ENCODE measurements at regions of chr12 and their contacts with region 1.

Region 1: GRCh38 chr12:104462931-104463339 is 6.2 kb downstream of the CHST11 start:
- DNase-seq: peak; percentile 71 to 76 (median 73)
- H3K4me3 ChIP-seq: peak overlapping the region in 2 of 3 experiments; percentile 10 to 64
- H3K4me3 Mint-ChIP-seq: peak overlapping the region; percentile 72 to 77
- H3K27ac ChIP-seq: peak overlapping the region; percentile 54 to 88
- H3K27ac Mint-ChIP-seq: peak overlapping the region; percentile 89 to 96 (median 94)
- H3K4me1 ChIP-seq: peaks cover 79 to 95% of the 10 kb centered on the region in 2 donors
- H3K4me1 Mint-ChIP-seq: peaks cover 82% of the 10 kb centered on the region
- H3K27me3 ChIP-seq: no peaks in the 10 kb centered on the region
- H3K27me3 Mint-ChIP-seq: peaks cover 0 to 2% (median 0%) of the 10 kb centered on the region in 3 donors
- CTCF ChIP-seq: no peak

Region 2: GRCh38 chr12:104478396-104479122 is 15.6 kb after region 1 on chr12:
- intact Hi-C with region 1: loop called in 1 of 2 experiments (anchors 2 kb)
- DNase-seq: peak; percentile 68 to 81 (median 79)
- H3K4me3 ChIP-seq: peak overlapping the region; percentile 29 to 65 (median 46)
- H3K4me3 Mint-ChIP-seq: peak overlapping the region; percentile 80 to 91
- H3K27ac ChIP-seq: peak overlapping the region; percentile 5 to 73
- H3K27ac Mint-ChIP-seq: peak overlapping the region; percentile 79 to 96 (median 93)
- H3K4me1 ChIP-seq: peaks cover 57 to 59% of the 10 kb centered on the region in 2 donors
- H3K4me1 Mint-ChIP-seq: peaks cover 84% of the 10 kb centered on the region
- H3K27me3 ChIP-seq: no peaks in the 10 kb centered on the region
- H3K27me3 Mint-ChIP-seq: peaks cover 0 to 5% (median 0%) of the 10 kb centered on the region in 3 donors
- CTCF ChIP-seq: no peak

Region 3: DNA sequence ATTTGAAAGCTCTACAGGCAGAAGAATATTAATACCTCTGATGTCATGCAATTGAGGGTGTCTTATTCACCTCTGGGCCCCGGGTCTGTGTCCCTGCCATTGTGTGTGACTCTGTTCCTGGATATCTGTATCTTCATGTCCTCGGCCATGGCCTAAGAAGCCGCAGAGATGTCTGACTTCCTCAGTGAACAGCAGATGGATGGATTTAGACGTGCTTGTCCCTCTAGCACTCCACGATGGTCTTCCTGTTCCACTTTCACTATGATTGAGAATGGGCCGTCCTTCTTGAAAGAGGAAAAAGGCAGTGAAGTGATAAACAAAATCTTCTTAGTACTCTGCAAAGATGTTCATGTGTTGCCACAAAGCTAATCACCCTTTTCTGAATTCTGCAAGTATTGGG is 277.7 kb after region 1 on chr12:
- intact Hi-C with region 1: loop called in 1 of 2 experiments (anchors 10 kb)
- DNase-seq: peak; percentile 77 to 85 (median 83)
- H3K4me3 ChIP-seq: peak overlapping the region in 1 of 3 experiments; percentile 58
- H3K4me3 Mint-ChIP-seq: peak overlapping the region; percentile 70 to 74
- H3K27ac ChIP-seq: peak overlapping the region; percentile 79
- H3K27ac Mint-ChIP-seq: peak overlapping the region; percentile 84 to 97 (median 94)
- H3K4me1 ChIP-seq: peaks cover 57 to 62% of the 10 kb centered on the region in 2 donors
- H3K4me1 Mint-ChIP-seq: peaks cover 69% of the 10 kb centered on the region
- H3K27me3 ChIP-seq: no peaks in the 10 kb centered on the region
- H3K27me3 Mint-ChIP-seq: no peaks in the 10 kb centered on the region
- CTCF ChIP-seq: no peak

Measured in CD14-positive monocyte (primary cell).